Transverse colon (tissue), 4 donors: ENCODE measurements at regions of chr20 and their contacts with region 1.

Region 1: GRCh38 chr20:10611357-10611756 is 62.4 kb downstream of the JAG1 start:
- DNase-seq: peak; percentile 50
- H3K4me3 ChIP-seq: no peak overlapping the region
- H3K27ac ChIP-seq: no peak overlapping the region
- H3K4me1 ChIP-seq: no peaks in the 10 kb centered on the region
- H3K27me3 ChIP-seq: no peaks in the 10 kb centered on the region
- CTCF ChIP-seq: peak; percentile 29 to 51 (median 34)
- EP300 ChIP-seq: no peak
- POLR2A ChIP-seq: no peak

Region 2: GRCh38 chr20:10060226-10060625 is 551.1 kb before region 1 on chr20:
- in situ Hi-C with region 1: no loop called
- intact Hi-C with region 1: no loop called
- DNase-seq: no peak
- H3K4me3 ChIP-seq: no peak overlapping the region
- H3K27ac ChIP-seq: no peak overlapping the region
- H3K4me1 ChIP-seq: no peaks in the 10 kb centered on the region
- H3K27me3 ChIP-seq: no peaks in the 10 kb centered on the region
- CTCF ChIP-seq: no peak
- EP300 ChIP-seq: no peak
- POLR2A ChIP-seq: no peak

Region 3: DNA sequence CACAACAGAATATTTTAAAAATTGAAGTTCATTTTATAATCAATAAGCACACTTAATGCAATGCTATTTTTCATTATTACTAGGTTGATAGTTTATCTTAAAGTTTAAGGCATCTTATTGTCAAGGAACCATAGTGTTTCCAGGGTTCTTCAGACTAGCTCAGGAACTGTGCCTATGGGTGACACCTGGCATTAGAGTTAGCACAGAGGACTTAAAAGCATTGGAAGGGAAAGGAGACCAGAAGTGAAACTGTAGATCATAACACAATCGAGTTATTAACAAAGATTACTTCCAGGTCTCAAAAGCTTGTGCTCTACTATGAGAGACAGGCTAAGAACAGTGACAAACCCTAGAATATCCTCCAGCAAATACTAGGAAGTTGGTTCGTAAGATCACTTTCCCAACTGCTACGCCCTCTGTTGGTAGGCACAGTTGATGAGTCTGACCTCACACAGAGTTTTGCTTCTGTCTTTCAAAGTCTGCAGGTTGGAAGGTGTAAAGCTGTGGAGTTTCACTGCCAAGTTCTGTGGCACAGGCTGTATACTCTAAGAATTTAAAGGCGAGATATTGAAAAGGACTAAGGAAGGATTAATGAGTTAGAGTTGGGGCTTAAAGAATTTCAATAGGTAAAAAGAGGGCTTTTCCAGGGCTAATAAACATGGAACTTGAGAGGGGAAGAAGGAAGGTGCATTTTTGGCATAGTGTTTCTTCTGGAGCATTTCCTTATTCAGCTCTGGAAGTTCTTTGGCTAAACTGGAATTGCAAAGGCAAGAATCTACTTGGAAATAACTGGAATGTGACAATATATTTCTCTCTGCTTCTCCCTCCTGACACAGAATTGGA is 593.8 kb after region 1 on chr20:
- in situ Hi-C with region 1: no loop called
- intact Hi-C with region 1: loop called (anchors 5 kb)
- DNase-seq: peak; percentile 74
- H3K4me3 ChIP-seq: no peak overlapping the region
- H3K27ac ChIP-seq: peak overlapping the region in 2 of 4 donors; percentile 19 to 42
- H3K4me1 ChIP-seq: peaks cover 0 to 19% (median 4%) of the 10 kb centered on the region in 4 donors
- H3K27me3 ChIP-seq: no peaks in the 10 kb centered on the region
- CTCF ChIP-seq: peak; percentile 63 to 80 (median 74)
- EP300 ChIP-seq: no peak
- POLR2A ChIP-seq: no peak